Endothelial cell of umbilical vein (primary cell): ENCODE measurements at regions of chrX and their contacts with region 1.

Region 1: DNA sequence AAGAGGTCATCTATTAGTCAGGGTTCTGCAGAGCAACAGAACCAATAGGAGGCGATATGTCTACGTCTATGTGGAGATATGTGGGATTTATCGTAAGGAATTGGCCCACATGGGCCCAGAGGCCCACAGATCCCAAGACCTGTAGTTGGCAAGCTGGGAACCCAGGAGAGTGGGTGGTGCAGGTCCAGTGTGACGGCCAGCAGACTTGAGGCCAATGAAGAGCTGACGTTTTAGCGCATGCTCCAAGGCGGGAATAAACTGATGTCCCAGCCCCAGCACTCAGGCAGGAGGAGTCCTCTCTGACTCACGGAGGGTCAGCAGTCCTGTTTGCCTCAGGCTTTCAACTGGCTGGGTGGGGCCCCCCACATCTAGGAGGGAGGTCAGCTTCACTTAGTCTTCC is 21.3 kb downstream of the SPACA5 start:
- DNase-seq: no peak
- H3K4me3 ChIP-seq: no peak overlapping the region
- H3K27ac ChIP-seq: no peak overlapping the region
- H3K4me1 ChIP-seq: no peaks in the 10 kb centered on the region
- H3K27me3 ChIP-seq: no peaks in the 10 kb centered on the region
- CTCF ChIP-seq: no peak
- POLR2A ChIP-seq: no peak

Region 2: GRCh38 chrX:47828984-47829383 is 199.1 kb before region 1 on chrX:
- CTCF ChIA-PET with region 1: interaction called, 11 read pairs
- POLR2A ChIA-PET with region 1: no interaction called
- dilution Hi-C with region 1: no loop called
- intact Hi-C with region 1: loop called (anchors 1 kb)
- DNase-seq: no peak
- H3K4me3 ChIP-seq: no peak overlapping the region
- H3K27ac ChIP-seq: no peak overlapping the region
- H3K4me1 ChIP-seq: no peaks in the 10 kb centered on the region
- H3K27me3 ChIP-seq: no peaks in the 10 kb centered on the region
- CTCF ChIP-seq: no peak
- POLR2A ChIP-seq: no peak

Region 3: DNA sequence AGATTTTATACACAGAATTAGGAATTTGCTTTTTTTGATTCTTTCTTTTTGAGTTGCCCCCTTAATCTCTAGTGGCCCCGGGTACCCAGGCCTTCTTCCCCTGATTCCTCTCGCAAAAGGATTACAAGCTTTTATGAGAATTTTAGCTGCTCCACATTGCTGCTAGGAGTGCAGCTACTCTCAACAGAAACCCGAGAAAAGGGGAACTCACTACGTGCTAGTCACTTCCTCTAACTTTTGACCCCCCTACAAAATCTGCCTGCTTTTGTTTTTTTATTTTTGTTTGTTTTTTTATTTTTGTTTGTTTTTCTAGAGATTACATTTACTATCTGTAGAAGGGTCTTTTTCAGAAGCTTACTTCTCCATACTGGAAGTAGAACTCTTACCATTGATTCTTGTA is 127.3 kb before region 1 on chrX:
- CTCF ChIA-PET with region 1: no interaction called
- POLR2A ChIA-PET with region 1: no interaction called
- dilution Hi-C with region 1: no loop called
- intact Hi-C with region 1: no loop called
- DNase-seq: peak; percentile 0
- H3K4me3 ChIP-seq: no peak overlapping the region
- H3K27ac ChIP-seq: no peak overlapping the region
- H3K4me1 ChIP-seq: peaks cover 6% of the 10 kb centered on the region
- H3K27me3 ChIP-seq: no peaks in the 10 kb centered on the region
- CTCF ChIP-seq: no peak
- POLR2A ChIP-seq: no peak

Region 4: DNA sequence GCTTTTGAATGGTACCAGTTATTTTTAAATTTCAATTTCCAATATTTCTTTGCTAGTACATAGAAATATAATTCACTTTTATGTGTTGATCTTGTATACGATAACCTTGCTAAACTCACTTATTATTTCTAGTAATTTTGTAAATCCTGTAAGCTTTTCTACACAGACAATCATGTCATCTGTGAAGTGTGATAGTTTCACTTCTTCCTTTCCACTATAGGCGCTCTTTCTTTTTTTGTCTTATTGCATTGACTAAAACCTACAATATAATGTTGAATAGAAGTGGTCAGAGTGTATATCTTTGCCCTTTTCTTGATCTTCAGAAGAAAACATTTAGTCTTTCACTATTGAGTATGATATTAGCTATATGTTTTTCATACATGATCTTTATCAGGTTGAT is 100.9 kb before region 1 on chrX:
- CTCF ChIA-PET with region 1: no interaction called
- POLR2A ChIA-PET with region 1: no interaction called
- dilution Hi-C with region 1: no loop called
- intact Hi-C with region 1: no loop called
- DNase-seq: no peak
- H3K4me3 ChIP-seq: no peak overlapping the region
- H3K27ac ChIP-seq: no peak overlapping the region
- H3K4me1 ChIP-seq: no peaks in the 10 kb centered on the region
- H3K27me3 ChIP-seq: no peaks in the 10 kb centered on the region
- CTCF ChIP-seq: no peak
- POLR2A ChIP-seq: no peak

Region 5: GRCh38 chrX:47941423-47941822 is 86.7 kb before region 1 on chrX:
- CTCF ChIA-PET with region 1: no interaction called
- POLR2A ChIA-PET with region 1: no interaction called
- dilution Hi-C with region 1: no loop called
- intact Hi-C with region 1: no loop called
- DNase-seq: no peak
- H3K4me3 ChIP-seq: no peak overlapping the region
- H3K27ac ChIP-seq: no peak overlapping the region
- H3K4me1 ChIP-seq: no peaks in the 10 kb centered on the region
- H3K27me3 ChIP-seq: no peaks in the 10 kb centered on the region
- CTCF ChIP-seq: no peak
- POLR2A ChIP-seq: no peak